ENCODE measurements at regions of chr2 and their contacts with region 1.

Region 1: GRCh38 chr2:106982350-106982749 is 96.4 kb upstream of the ST6GAL2 start:
- DNase-seq: no peak
- ATAC-seq: no peak
- H3K4me3 ChIP-seq: no peak overlapping the region
- H3K4me3 Mint-ChIP-seq: no peak overlapping the region
- H3K27ac ChIP-seq: no peak overlapping the region
- H3K27ac Mint-ChIP-seq: no peak overlapping the region
- H3K4me1 ChIP-seq: no peaks in the 10 kb centered on the region
- H3K4me1 Mint-ChIP-seq: no peaks in the 10 kb centered on the region
- H3K27me3 ChIP-seq: no peaks in the 10 kb centered on the region
- H3K27me3 Mint-ChIP-seq: no peaks in the 10 kb centered on the region
- CTCF ChIP-seq: no peak

Region 2: DNA sequence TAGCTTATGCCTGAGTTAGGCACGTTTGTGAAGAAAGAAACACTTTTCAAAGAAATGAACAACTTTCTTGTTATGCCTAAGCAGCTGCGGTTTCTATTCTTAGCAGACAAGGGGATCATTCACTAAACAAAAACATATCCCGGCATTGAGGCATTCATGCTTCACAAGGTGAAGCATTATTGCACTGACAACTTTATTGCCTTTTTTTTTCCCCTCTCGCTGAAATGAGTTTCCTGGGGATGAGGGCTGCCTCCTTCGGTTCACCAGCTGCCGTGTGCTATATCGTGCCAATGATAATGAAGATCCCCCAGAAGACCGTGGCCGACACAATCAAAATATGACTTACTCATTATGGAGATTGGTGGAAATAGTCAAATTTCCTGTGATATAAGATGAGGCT is 191.8 kb after region 1 on chr2:
- intact Hi-C with region 1: loop called (anchors 10 kb)
- DNase-seq: no peak
- ATAC-seq: no peak
- H3K4me3 ChIP-seq: no peak overlapping the region
- H3K4me3 Mint-ChIP-seq: no peak overlapping the region
- H3K27ac ChIP-seq: no peak overlapping the region
- H3K27ac Mint-ChIP-seq: no peak overlapping the region
- H3K4me1 ChIP-seq: no peaks in the 10 kb centered on the region
- H3K4me1 Mint-ChIP-seq: no peaks in the 10 kb centered on the region
- H3K27me3 ChIP-seq: no peaks in the 10 kb centered on the region
- H3K27me3 Mint-ChIP-seq: no peaks in the 10 kb centered on the region
- CTCF ChIP-seq: no peak

Region 3: GRCh38 chr2:107349330-107349729 is 367.0 kb after region 1 on chr2:
- intact Hi-C with region 1: no loop called
- DNase-seq: no peak
- ATAC-seq: no peak
- H3K4me3 ChIP-seq: no peak overlapping the region
- H3K4me3 Mint-ChIP-seq: no peak overlapping the region
- H3K27ac ChIP-seq: no peak overlapping the region
- H3K27ac Mint-ChIP-seq: no peak overlapping the region
- H3K4me1 ChIP-seq: no peaks in the 10 kb centered on the region
- H3K4me1 Mint-ChIP-seq: no peaks in the 10 kb centered on the region
- H3K27me3 ChIP-seq: no peaks in the 10 kb centered on the region
- H3K27me3 Mint-ChIP-seq: no peaks in the 10 kb centered on the region
- CTCF ChIP-seq: no peak